ENCODE measurements at regions of chr5 and their contacts with region 1.

Region 1: GRCh38 chr5:168579488-168580226 is 489 bp upstream of the PANK3 start:
- DNase-seq: peak; percentile 94 to 98 (median 96)
- H3K4me3 ChIP-seq: peak overlapping the region; percentile 39 to 94
- H3K4me3 Mint-ChIP-seq: peak overlapping the region; percentile 88 to 98 (median 94)
- H3K27ac ChIP-seq: peak overlapping the region; percentile 80
- H3K27ac Mint-ChIP-seq: peak overlapping the region; percentile 87 to 99 (median 97)
- H3K4me1 ChIP-seq: peaks cover 39% of the 10 kb centered on the region
- H3K4me1 Mint-ChIP-seq: peaks cover 23 to 48% (median 36%) of the 10 kb centered on the region in 4 donors
- H3K27me3 ChIP-seq: no peaks in the 10 kb centered on the region
- H3K27me3 Mint-ChIP-seq: no peaks in the 10 kb centered on the region

Region 2: DNA sequence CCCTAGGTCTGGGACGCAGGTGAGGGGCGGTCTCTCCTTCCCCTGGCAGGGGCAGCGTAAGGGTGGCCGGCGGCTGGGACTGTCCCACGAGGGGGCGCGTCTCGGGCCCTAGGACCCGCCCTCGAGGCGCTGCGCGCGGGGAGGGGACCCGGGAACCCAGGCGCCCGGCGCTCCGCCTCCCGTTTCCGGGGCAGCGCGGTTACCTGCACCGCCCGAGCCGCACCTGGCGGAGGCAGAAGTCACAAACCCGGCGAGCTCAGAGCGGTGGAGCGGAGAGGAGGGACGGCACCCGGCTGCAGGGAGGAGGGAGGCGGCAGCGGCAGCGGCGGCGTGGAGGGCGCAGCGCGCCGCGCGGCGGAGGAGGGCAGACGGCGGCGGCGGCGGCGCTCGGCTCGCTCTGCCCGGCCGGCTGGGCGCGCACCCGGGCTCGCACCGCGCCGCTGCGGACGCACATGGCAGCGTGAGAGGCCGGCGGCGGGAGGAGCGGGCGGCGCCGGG is 288.1 kb before region 1 on chr5 and contains the start of gene WWC1:
- CTCF ChIA-PET with region 1: no interaction called
- POLR2A ChIA-PET with region 1: no interaction called
- intact Hi-C with region 1: loop called (anchors 5 kb)
- DNase-seq: peak; percentile 62 to 83 (median 76)
- H3K4me3 ChIP-seq: no peak within 1 kb of the TSS
- H3K4me3 Mint-ChIP-seq: peak within 1 kb of the TSS; percentile 71 to 86 (median 82)
- H3K27ac ChIP-seq: no peak within 1 kb of the TSS
- H3K27ac Mint-ChIP-seq: peak within 1 kb of the TSS in 2 of 7 donors; percentile 17 to 35
- H3K4me1 ChIP-seq: peaks cover 15% of the 10 kb centered on the region
- H3K4me1 Mint-ChIP-seq: peaks cover 6 to 22% (median 16%) of the 10 kb centered on the region in 4 donors
- H3K27me3 ChIP-seq: peaks cover 14% of the 10 kb centered on the region
- H3K27me3 Mint-ChIP-seq: peaks cover 4 to 10% of the 10 kb centered on the region in 2 donors
- total RNA-seq, gene WWC1: 2.0 to 2.7 TPM

Region 3: GRCh38 chr5:168377525-168377924 is 202.1 kb before region 1 on chr5:
- CTCF ChIA-PET with region 1: no interaction called
- POLR2A ChIA-PET with region 1: no interaction called
- intact Hi-C with region 1: loop called (anchors 1 kb)
- DNase-seq: peak; percentile 51 to 78 (median 72)
- H3K4me3 ChIP-seq: no peak overlapping the region
- H3K4me3 Mint-ChIP-seq: peak overlapping the region in 7 of 8 donors; percentile 22 to 72 (median 55)
- H3K27ac ChIP-seq: no peak overlapping the region
- H3K27ac Mint-ChIP-seq: peak overlapping the region; percentile 72 to 93 (median 77)
- H3K4me1 ChIP-seq: peaks cover 22% of the 10 kb centered on the region
- H3K4me1 Mint-ChIP-seq: peaks cover 14 to 35% (median 28%) of the 10 kb centered on the region in 4 donors
- H3K27me3 ChIP-seq: no peaks in the 10 kb centered on the region
- H3K27me3 Mint-ChIP-seq: no peaks in the 10 kb centered on the region

Region 4: GRCh38 chr5:168401907-168402306 is 177.8 kb before region 1 on chr5:
- CTCF ChIA-PET with region 1: no interaction called
- POLR2A ChIA-PET with region 1: no interaction called
- intact Hi-C with region 1: no loop called
- DNase-seq: no peak
- H3K4me3 ChIP-seq: no peak overlapping the region
- H3K4me3 Mint-ChIP-seq: no peak overlapping the region
- H3K27ac ChIP-seq: no peak overlapping the region
- H3K27ac Mint-ChIP-seq: no peak overlapping the region
- H3K4me1 ChIP-seq: no peaks in the 10 kb centered on the region
- H3K4me1 Mint-ChIP-seq: no peaks in the 10 kb centered on the region
- H3K27me3 ChIP-seq: no peaks in the 10 kb centered on the region
- H3K27me3 Mint-ChIP-seq: peaks cover 0 to 1% of the 10 kb centered on the region in 2 donors

Region 5: GRCh38 chr5:168486136-168486879 is 93.3 kb before region 1 on chr5 and contains the start of gene RARS1:
- CTCF ChIA-PET with region 1: interaction called, 4 read pairs
- POLR2A ChIA-PET with region 1: interaction called, 7 read pairs
- intact Hi-C with region 1: loop called (anchors 1 kb)
- DNase-seq: peak; percentile 78 to 90 (median 81)
- H3K4me3 ChIP-seq: peak within 1 kb of the TSS; percentile 89 to 96
- H3K4me3 Mint-ChIP-seq: peak within 1 kb of the TSS; percentile 98 to 100 (median 99)
- H3K27ac ChIP-seq: peak within 1 kb of the TSS; percentile 71
- H3K27ac Mint-ChIP-seq: peak within 1 kb of the TSS; percentile 91 to 99 (median 97)
- H3K4me1 ChIP-seq: peaks cover 13% of the 10 kb centered on the region
- H3K4me1 Mint-ChIP-seq: peaks cover 23 to 50% (median 36%) of the 10 kb centered on the region in 4 donors
- H3K27me3 ChIP-seq: no peaks in the 10 kb centered on the region
- H3K27me3 Mint-ChIP-seq: peaks cover 0 to 5% of the 10 kb centered on the region in 2 donors
- total RNA-seq, gene RARS1: 82.5 to 82.8 TPM

Region 6: GRCh38 chr5:168612996-168613395 is 33.3 kb after region 1 on chr5:
- CTCF ChIA-PET with region 1: no interaction called
- POLR2A ChIA-PET with region 1: interaction called, 16 read pairs
- intact Hi-C with region 1: loop called (anchors 2 kb)
- DNase-seq: peak; percentile 42 to 55 (median 46)
- H3K4me3 ChIP-seq: no peak overlapping the region
- H3K4me3 Mint-ChIP-seq: peak overlapping the region in 7 of 8 donors; percentile 1 to 69 (median 51)
- H3K27ac ChIP-seq: no peak overlapping the region
- H3K27ac Mint-ChIP-seq: peak overlapping the region; percentile 29 to 95 (median 89)
- H3K4me1 ChIP-seq: peaks cover 9% of the 10 kb centered on the region
- H3K4me1 Mint-ChIP-seq: peaks cover 9 to 18% (median 11%) of the 10 kb centered on the region in 4 donors
- H3K27me3 ChIP-seq: no peaks in the 10 kb centered on the region
- H3K27me3 Mint-ChIP-seq: peaks cover 0 to 6% of the 10 kb centered on the region in 2 donors

Region 7: GRCh38 chr5:168765551-168766425 is 186.1 kb after region 1 on chr5:
- CTCF ChIA-PET with region 1: no interaction called
- POLR2A ChIA-PET with region 1: no interaction called
- intact Hi-C with region 1: no loop called
- DNase-seq: no peak
- H3K4me3 ChIP-seq: no peak overlapping the region
- H3K4me3 Mint-ChIP-seq: no peak overlapping the region
- H3K27ac ChIP-seq: no peak overlapping the region
- H3K27ac Mint-ChIP-seq: no peak overlapping the region
- H3K4me1 ChIP-seq: no peaks in the 10 kb centered on the region
- H3K4me1 Mint-ChIP-seq: no peaks in the 10 kb centered on the region
- H3K27me3 ChIP-seq: no peaks in the 10 kb centered on the region
- H3K27me3 Mint-ChIP-seq: no peaks in the 10 kb centered on the region

Region 8: GRCh38 chr5:169637085-169637548 is 1057.5 kb after region 1 on chr5 and contains the start of gene DOCK2:
- CTCF ChIA-PET with region 1: no interaction called
- POLR2A ChIA-PET with region 1: no interaction called
- intact Hi-C with region 1: loop called (anchors 2 kb)
- DNase-seq: peak; percentile 61 to 82 (median 66)
- H3K4me3 ChIP-seq: peak within 1 kb of the TSS; percentile 71 to 80
- H3K4me3 Mint-ChIP-seq: peak within 1 kb of the TSS; percentile 91 to 96 (median 94)
- H3K27ac ChIP-seq: peak within 1 kb of the TSS; percentile 82
- H3K27ac Mint-ChIP-seq: peak within 1 kb of the TSS; percentile 93 to 97 (median 94)
- H3K4me1 ChIP-seq: peaks cover 50% of the 10 kb centered on the region
- H3K4me1 Mint-ChIP-seq: peaks cover 37 to 55% (median 45%) of the 10 kb centered on the region in 4 donors
- H3K27me3 ChIP-seq: no peaks in the 10 kb centered on the region
- H3K27me3 Mint-ChIP-seq: no peaks in the 10 kb centered on the region
- total RNA-seq, gene DOCK2: 222 to 223 TPM

Measured in CD4-positive, alpha-beta memory T cell (primary cell).